ENCODE measurements at regions of chr2 and their contacts with region 1.

Region 1: GRCh38 chr2:134718817-134719814 is at the start of gene TMEM163:
- DNase-seq: no peak
- ATAC-seq: no peak
- total RNA-seq, gene TMEM163: 0.45 TPM

Region 2: GRCh38 chr2:134245340-134245984 is 473.7 kb before region 1 on chr2:
- intact Hi-C with region 1: no loop called
- DNase-seq: peak; percentile 89
- ATAC-seq: peak; percentile 79

Region 3: GRCh38 chr2:135004005-135004746 is 285.1 kb after region 1 on chr2:
- intact Hi-C with region 1: no loop called
- DNase-seq: peak; percentile 81
- ATAC-seq: peak; percentile 95

Region 4: GRCh38 chr2:135960656-135961551 is 1241.8 kb after region 1 on chr2:
- intact Hi-C with region 1: loop called (anchors 10 kb)
- DNase-seq: no peak
- ATAC-seq: no peak

Measured in sciatic nerve (tissue), 2 donors.